ENCODE measurements at regions of chr3 and their contacts with region 1.

Region 1: GRCh38 chr3:184314363-184314699 is at the start of gene EIF4G1:
- DNase-seq: peak; percentile 82 to 98
- H3K4me3 ChIP-seq: peak within 1 kb of the TSS; percentile 63
- H3K27ac ChIP-seq: peak within 1 kb of the TSS; percentile 84
- H3K4me1 ChIP-seq: peaks cover 43% of the 10 kb centered on the region
- H3K27me3 ChIP-seq: no peaks in the 10 kb centered on the region
- CTCF ChIP-seq: no peak
- total RNA-seq, gene EIF4G1: 657 and 721 TPM in 2 replicates

Region 2: DNA sequence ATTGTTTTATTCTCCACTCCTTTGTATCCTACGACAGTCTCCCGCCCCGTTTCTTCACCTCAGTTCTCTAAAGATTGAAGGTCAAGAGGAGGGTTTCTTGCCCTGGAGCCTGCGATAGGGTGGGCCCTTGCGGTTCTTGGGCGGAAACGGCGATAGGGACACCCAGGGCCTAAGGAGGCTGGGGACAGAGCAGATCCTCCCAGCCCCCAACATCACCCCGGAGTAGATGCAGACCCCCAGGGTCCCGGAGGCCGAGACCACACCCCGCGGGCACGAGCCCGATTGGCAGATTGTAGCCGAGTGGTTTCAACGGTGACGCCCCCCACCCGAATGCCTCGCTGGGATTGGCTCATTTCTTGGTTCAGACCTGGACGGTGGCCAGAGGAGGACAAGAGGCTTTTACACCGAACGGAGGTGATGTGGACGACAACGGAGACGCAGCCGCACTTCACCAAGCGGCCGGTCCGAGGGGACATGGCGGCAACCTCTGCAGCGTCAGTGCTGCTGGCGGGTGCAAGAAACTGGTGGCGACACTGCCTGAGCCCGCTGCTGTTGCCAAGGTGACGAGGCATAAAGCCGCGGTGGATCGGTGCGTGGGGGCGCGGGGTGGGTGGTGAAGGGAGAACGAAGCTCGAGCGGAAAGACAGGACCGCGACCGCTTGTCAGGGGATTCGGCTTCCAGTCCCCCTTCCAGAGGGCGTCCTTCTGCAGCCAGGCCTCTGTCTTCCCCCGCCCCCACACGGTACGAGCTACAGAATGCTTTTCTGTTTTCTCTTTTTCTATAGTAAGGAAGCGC is 866.9 kb before region 1 on chr3:
- CTCF ChIA-PET with region 1: no interaction called
- POLR2A ChIA-PET with region 1: interaction called, 10 read pairs
- intact Hi-C with region 1: no loop called
- DNase-seq: peak; percentile 82 to 91
- H3K4me3 ChIP-seq: peak overlapping the region; percentile 88
- H3K27ac ChIP-seq: no peak overlapping the region
- H3K4me1 ChIP-seq: peaks cover 20% of the 10 kb centered on the region
- H3K27me3 ChIP-seq: no peaks in the 10 kb centered on the region
- CTCF ChIP-seq: no peak

Region 3: DNA sequence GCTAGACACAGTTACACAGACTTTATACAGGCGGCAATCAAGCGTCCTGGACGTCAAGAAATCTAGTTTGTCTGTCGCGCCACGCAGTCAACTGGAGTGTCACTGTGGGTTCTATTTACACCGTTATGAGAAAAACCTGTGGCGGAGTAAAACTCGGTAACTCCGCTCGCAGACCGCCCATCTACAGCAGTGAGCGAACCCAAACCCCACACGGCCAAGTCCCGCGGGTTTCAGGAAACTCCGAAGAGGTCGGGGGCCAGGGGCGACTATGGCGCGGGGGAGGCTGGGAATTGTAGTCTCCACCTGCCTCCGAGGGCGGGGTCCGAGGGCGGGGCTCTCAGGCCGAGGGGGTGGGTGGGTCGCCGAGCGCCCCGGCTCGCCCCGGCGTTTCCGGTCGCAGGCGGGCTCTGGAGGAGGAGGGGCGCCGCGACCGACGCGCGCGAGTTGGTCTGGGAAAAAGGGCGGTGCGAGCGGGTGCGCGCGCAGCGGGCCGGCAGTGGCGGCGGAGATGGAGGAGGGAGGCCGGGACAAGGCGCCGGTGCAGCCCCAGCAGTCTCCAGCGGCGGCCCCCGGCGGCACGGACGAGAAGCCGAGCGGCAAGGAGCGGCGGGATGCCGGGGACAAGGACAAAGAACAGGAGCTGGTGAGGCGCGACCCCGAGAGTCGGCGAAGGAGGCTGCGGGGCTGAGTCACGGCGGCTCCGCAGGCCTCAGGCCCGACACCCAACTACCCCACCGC is 15.4 kb before region 1 on chr3 and contains the start of gene PSMD2:
- CTCF ChIA-PET with region 1: no interaction called
- POLR2A ChIA-PET with region 1: interaction called, 4 read pairs
- intact Hi-C with region 1: loop called (anchors 1 kb)
- DNase-seq: peak; percentile 92 to 99
- H3K4me3 ChIP-seq: peak within 1 kb of the TSS; percentile 100
- H3K27ac ChIP-seq: peak within 1 kb of the TSS; percentile 57
- H3K4me1 ChIP-seq: peaks cover 15% of the 10 kb centered on the region
- H3K27me3 ChIP-seq: no peaks in the 10 kb centered on the region
- CTCF ChIP-seq: no peak
- total RNA-seq, gene PSMD2: 521 and 788 TPM in 2 replicates

Region 4: DNA sequence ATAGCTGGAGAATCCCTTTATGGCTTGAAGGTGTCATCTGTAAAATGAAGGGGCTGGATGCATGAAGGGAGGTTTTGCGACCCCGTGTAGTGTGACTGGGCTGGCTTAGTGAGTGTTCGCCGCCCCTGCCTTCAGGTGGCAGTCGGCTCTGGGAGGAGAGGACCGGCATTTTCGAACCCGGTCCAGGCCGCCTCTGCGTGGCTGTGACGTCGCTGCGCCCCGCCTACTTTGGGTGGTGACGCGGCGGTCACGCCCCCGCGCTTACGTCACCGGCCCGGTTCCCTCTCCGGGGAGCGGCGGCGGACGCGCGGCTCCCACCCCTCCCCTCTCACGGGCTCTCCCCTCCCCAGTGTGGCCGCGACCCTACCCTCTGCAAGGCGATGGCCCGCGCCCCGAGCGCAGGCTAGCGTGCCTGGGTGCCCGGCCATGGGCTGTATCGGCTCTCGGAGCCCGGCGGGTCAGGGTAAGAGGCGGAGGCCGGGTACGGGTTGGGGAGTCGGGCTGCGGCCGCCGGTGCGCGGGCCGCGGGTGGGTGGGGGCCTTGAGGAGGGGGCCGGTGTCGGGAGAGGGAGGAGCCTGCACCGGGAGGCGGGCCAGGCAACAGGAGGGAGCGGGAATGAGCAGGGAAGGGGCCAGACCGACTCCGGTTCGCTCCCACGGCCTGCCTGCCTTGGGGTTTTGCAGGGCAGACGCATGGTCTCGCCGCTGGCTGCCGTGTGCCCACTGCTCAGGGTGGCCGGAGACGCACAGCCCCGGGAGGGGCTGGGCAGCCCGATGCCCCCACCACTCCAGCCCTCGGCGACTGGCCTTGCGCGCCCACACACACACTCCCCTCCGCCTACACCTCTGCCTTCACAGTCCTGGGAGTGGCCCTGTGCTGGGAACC is 21.6 kb after region 1 on chr3:
- CTCF ChIA-PET with region 1: no interaction called
- POLR2A ChIA-PET with region 1: no interaction called
- intact Hi-C with region 1: loop called (anchors 1 kb)
- DNase-seq: peak; percentile 53 to 89
- H3K4me3 ChIP-seq: peak overlapping the region; percentile 68
- H3K27ac ChIP-seq: peak overlapping the region; percentile 73
- H3K4me1 ChIP-seq: peaks cover 55% of the 10 kb centered on the region
- H3K27me3 ChIP-seq: no peaks in the 10 kb centered on the region
- CTCF ChIP-seq: no peak

Region 5: DNA sequence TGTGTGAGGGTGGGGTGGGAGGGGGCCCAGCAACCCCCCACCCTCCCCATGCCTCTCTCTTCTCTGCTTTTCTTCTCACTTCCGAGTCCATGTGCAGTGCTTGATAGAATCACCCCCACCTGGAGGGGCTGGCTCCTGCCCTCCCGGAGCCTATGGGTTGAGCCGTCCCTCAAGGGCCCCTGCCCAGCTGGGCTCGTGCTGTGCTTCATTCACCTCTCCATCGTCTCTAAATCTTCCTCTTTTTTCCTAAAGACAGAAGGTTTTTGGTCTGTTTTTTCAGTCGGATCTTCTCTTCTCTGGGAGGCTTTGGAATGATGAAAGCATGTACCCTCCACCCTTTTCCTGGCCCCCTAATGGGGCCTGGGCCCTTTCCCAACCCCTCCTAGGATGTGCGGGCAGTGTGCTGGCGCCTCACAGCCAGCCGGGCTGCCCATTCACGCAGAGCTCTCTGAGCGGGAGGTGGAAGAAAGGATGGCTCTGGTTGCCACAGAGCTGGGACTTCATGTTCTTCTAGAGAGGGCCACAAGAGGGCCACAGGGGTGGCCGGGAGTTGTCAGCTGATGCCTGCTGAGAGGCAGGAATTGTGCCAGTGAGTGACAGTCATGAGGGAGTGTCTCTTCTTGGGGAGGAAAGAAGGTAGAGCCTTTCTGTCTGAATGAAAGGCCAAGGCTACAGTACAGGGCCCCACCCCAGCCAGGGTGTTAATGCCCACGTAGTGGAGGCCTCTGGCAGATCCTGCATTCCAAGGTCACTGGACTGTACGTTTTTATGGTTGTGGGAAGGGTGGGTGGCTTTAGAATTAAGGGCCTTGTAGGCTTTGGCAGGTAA is 31.2 kb after region 1 on chr3:
- CTCF ChIA-PET with region 1: interaction called, 13 read pairs
- POLR2A ChIA-PET with region 1: no interaction called
- intact Hi-C with region 1: loop called (anchors 5 kb)
- DNase-seq: peak; percentile 83
- H3K4me3 ChIP-seq: no peak overlapping the region
- H3K27ac ChIP-seq: no peak overlapping the region
- H3K4me1 ChIP-seq: peaks cover 8% of the 10 kb centered on the region; the same call in 1 of the 2 replicates
- H3K27me3 ChIP-seq: no peaks in the 10 kb centered on the region
- CTCF ChIP-seq: peak; percentile 86

Region 6: DNA sequence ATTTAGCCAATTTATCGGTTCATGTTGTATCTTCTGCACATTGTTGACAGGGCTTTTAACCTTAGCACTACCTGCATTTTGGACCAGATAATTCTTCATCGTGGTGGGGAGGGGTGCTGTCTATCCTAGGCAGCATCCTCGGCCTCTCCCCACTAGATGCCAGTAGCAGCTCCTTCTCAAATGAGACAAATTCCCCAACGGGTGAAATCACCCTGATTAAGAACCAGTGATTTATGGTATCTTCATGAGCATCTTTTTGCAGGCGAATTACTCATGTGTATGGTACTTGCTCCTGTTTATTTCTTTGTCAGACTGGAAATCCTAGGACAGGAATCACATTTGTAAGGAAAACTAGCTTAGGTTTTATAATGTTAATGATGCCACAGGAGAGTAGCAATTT is 770.6 kb after region 1 on chr3:
- CTCF ChIA-PET with region 1: no interaction called
- POLR2A ChIA-PET with region 1: no interaction called
- intact Hi-C with region 1: no loop called
- DNase-seq: no peak
- H3K4me3 ChIP-seq: no peak overlapping the region
- H3K27ac ChIP-seq: no peak overlapping the region
- H3K4me1 ChIP-seq: no peaks in the 10 kb centered on the region
- H3K27me3 ChIP-seq: peaks cover 42% of the 10 kb centered on the region
- CTCF ChIP-seq: no peak